ENCODE measurements at regions of chr5 and their contacts with region 1.

Region 1: GRCh38 chr5:139633295-139634027 is 14.7 kb upstream of the CXXC5 start:
- DNase-seq: peak; percentile 82
- H3K4me3 ChIP-seq: peak overlapping the region; percentile 34
- H3K27ac ChIP-seq: peak overlapping the region; percentile 98
- H3K4me1 ChIP-seq: peaks cover 63% of the 10 kb centered on the region
- CTCF ChIP-seq: peak; percentile 99

Region 2: DNA sequence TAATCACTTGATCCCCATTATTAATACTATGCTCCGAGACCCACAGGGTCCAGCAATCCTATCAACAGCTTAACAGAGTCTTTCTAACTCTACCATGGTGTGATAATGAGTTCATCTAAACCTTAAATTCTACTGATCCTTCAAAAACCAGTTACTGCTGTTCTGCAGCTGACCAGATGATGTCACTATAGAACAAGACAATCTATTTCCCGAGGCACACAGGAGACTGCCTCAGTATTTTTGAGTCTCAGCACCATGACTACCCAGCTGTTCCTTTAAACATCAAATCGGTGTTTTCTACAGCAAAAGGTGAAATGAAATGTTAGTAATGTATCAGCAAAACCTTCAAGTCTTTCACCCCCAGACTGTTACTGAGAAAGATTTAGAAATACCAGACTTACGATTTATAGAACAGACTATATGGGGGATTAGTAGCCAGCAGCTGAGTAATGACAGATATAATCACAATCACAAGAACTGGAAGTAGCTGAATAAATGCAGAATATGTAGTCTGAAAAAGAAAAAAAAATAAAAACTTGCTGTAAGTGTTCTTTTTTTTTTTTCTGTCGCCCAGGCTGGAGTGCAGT is 211.1 kb before region 1 on chr5:
- CTCF ChIA-PET with region 1: no interaction called
- POLR2A ChIA-PET with region 1: no interaction called
- intact Hi-C with region 1: loop called (anchors 2 kb)
- DNase-seq: peak; percentile 79
- H3K4me3 ChIP-seq: no peak overlapping the region
- H3K27ac ChIP-seq: no peak overlapping the region
- H3K4me1 ChIP-seq: no peaks in the 10 kb centered on the region
- CTCF ChIP-seq: peak; percentile 99

Region 3: GRCh38 chr5:139574641-139575312 is 58.7 kb before region 1 on chr5:
- CTCF ChIA-PET with region 1: interaction called, 3 read pairs
- POLR2A ChIA-PET with region 1: interaction called, 4 read pairs
- intact Hi-C with region 1: loop called (anchors 1 kb)
- DNase-seq: peak; percentile 79
- H3K4me3 ChIP-seq: peak overlapping the region; percentile 0
- H3K27ac ChIP-seq: peak overlapping the region; percentile 72
- H3K4me1 ChIP-seq: peaks cover 77% of the 10 kb centered on the region
- CTCF ChIP-seq: peak; percentile 94

Region 4: GRCh38 chr5:139670369-139671095 is 37.1 kb after region 1 on chr5:
- CTCF ChIA-PET with region 1: interaction called, 11 read pairs
- POLR2A ChIA-PET with region 1: interaction called, 13 read pairs
- intact Hi-C with region 1: loop called (anchors 1 kb)
- DNase-seq: peak; percentile 98
- H3K4me3 ChIP-seq: peak overlapping the region; percentile 74
- H3K27ac ChIP-seq: peak overlapping the region; percentile 99
- H3K4me1 ChIP-seq: peaks cover 89% of the 10 kb centered on the region
- CTCF ChIP-seq: peak; percentile 82

Region 5: DNA sequence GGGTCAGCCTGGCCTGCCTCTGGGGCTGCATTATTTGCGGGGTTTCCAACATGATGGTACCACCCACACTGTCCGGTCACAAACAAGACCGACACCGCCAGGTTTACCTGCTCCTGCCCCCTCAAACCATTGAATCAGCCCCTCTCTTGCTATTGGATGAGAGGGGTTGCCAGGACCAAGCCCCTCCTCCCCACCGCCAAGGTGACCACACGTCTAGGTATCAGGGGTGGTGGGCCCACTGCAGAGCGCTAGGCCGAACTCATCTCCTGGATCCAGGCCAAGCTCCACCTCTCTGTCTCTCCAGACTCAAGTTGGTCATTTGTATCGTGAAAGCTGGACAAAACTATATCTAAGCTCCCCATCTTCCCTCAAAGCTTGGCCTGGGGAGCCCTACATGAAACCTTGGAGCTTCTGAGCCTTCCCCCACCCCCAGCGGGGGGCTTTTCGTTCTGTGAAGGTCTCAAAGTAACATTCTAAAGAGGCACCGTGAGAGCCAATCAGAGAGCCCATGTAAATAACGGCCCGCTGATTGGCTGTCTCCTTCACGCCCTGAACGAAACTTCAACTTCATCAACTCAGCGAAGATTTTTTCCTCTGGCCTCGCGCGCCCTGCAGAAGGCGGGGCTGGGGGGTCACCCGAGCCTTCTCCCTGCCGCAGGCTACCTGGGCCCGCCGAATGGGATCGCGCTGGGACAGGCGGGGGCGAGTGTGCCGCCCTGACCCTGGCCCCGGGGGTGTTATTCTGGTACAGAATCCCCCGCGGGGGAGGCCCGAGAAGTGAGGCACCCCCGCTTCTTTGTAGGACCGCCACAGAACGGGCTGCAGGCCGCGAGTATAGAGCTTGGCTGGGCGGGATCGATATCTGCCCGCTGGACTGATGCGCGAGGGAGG is 112.6 kb after region 1 on chr5:
- CTCF ChIA-PET with region 1: no interaction called
- POLR2A ChIA-PET with region 1: no interaction called
- intact Hi-C with region 1: loop called (anchors 5 kb)
- DNase-seq: peak; percentile 71
- H3K4me3 ChIP-seq: peak overlapping the region; percentile 48
- H3K27ac ChIP-seq: no peak overlapping the region
- H3K4me1 ChIP-seq: peaks cover 26% of the 10 kb centered on the region
- CTCF ChIP-seq: no peak